AG04449 (cell line): ENCODE measurements at regions of chr7 and their contacts with region 1.

Region 1: GRCh38 chr7:116525913-116526861 is 1.4 kb downstream of the CAV1 start:
- DNase-seq: no peak
- H3K4me3 ChIP-seq: peak overlapping the region; percentile 99
- CTCF ChIP-seq: peak; percentile 77

Region 2: GRCh38 chr7:116159711-116160110 is 366.5 kb before region 1 on chr7:
- CTCF ChIA-PET with region 1: no interaction called
- POLR2A ChIA-PET with region 1: no interaction called
- DNase-seq: no peak
- H3K4me3 ChIP-seq: no peak overlapping the region
- CTCF ChIP-seq: no peak

Region 3: GRCh38 chr7:116242178-116242577 is 284.0 kb before region 1 on chr7:
- CTCF ChIA-PET with region 1: interaction called, 18 read pairs
- POLR2A ChIA-PET with region 1: no interaction called
- DNase-seq: no peak
- H3K4me3 ChIP-seq: no peak overlapping the region
- CTCF ChIP-seq: no peak

Region 4: GRCh38 chr7:116265881-116266280 is 260.3 kb before region 1 on chr7:
- CTCF ChIA-PET with region 1: interaction called, 129 read pairs
- POLR2A ChIA-PET with region 1: interaction called, 36 read pairs
- DNase-seq: no peak
- H3K4me3 ChIP-seq: no peak overlapping the region
- CTCF ChIP-seq: no peak

Region 5: GRCh38 chr7:116443101-116443523 is 83.1 kb before region 1 on chr7:
- CTCF ChIA-PET with region 1: interaction called, 14 read pairs
- POLR2A ChIA-PET with region 1: interaction called, 20 read pairs
- DNase-seq: peak; percentile 76
- H3K4me3 ChIP-seq: no peak overlapping the region
- CTCF ChIP-seq: no peak

Region 6: GRCh38 chr7:116571037-116571436 is 44.9 kb after region 1 on chr7:
- CTCF ChIA-PET with region 1: interaction called, 14 read pairs
- POLR2A ChIA-PET with region 1: interaction called, 18 read pairs
- DNase-seq: no peak
- H3K4me3 ChIP-seq: no peak overlapping the region
- CTCF ChIP-seq: no peak

Region 7: GRCh38 chr7:117098457-117098856 is 572.3 kb after region 1 on chr7:
- CTCF ChIA-PET with region 1: no interaction called
- POLR2A ChIA-PET with region 1: no interaction called
- DNase-seq: peak; percentile 95
- H3K4me3 ChIP-seq: no peak overlapping the region
- CTCF ChIP-seq: no peak